SK-N-SH (cell line): ENCODE measurements at regions of chr16 and their contacts with region 1.

Region 1: GRCh38 chr16:30758988-30759521 is 2.8 kb downstream of the CFAP119 start:
- DNase-seq: no peak
- H3K4me3 ChIP-seq: no peak overlapping the region
- H3K27ac ChIP-seq: no peak overlapping the region
- H3K4me1 ChIP-seq: peaks cover 15 to 24% of the 10 kb centered on the region in 2 experiments
- H3K27me3 ChIP-seq: no peaks in the 10 kb centered on the region
- CTCF ChIP-seq: no peak
- EP300 ChIP-seq: no peak
- RAD21 ChIP-seq: no peak

Region 2: DNA sequence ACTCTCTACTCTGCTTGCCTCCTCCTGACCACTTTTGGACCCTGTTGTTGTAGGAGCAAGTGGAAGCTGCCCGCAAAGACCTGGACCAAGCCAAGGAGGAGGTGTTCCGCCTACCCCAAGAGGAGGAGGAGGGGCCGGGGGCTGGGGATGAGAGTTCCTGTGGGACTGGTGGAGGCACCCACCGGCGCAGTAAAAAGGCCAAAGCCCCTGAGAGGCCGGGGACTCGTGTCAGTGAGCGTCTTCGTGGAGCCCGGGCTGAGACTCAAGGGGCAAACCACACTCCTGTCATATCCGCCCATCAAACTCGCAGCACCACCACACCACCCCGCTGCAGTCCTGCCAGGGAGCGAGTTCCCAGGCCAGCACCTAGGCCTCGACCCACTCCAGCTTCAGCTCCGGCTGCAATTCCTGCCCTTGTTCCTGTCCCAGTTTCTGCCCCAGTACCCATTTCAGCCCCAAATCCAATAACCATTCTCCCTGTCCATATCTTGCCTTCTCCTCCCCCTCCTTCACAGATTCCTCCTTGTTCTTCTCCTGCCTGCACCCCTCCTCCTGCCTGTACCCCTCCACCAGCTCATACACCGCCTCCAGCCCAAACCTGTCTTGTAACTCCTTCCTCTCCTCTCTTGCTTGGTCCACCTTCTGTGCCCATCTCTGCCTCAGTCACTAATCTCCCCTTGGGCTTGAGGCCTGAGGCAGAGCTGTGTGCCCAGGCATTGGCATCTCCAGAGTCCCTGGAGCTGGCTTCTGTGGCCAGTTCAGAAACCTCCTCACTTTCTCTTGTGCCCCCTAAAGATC is 21.9 kb before region 1 on chr16:
- CTCF ChIA-PET with region 1: no interaction called
- POLR2A ChIA-PET with region 1: no interaction called
- DNase-seq: no peak
- H3K4me3 ChIP-seq: no peak overlapping the region
- H3K27ac ChIP-seq: no peak overlapping the region
- H3K4me1 ChIP-seq: peaks cover 11 to 21% of the 10 kb centered on the region in 2 experiments; a peak in 3 of 4 replicates
- H3K27me3 ChIP-seq: no peaks in the 10 kb centered on the region
- CTCF ChIP-seq: no peak
- EP300 ChIP-seq: no peak
- RAD21 ChIP-seq: no peak

Region 3: GRCh38 chr16:30747799-30748634 is 11.0 kb before region 1 on chr16 and contains the start of gene PHKG2:
- CTCF ChIA-PET with region 1: interaction called, 3 read pairs
- POLR2A ChIA-PET with region 1: interaction called, 10 read pairs
- DNase-seq: peak; percentile 96
- H3K4me3 ChIP-seq: peak within 1 kb of the TSS; percentile 69 to 74
- H3K27ac ChIP-seq: peak within 1 kb of the TSS; percentile 76 to 83
- H3K4me1 ChIP-seq: peaks cover 5 to 8% of the 10 kb centered on the region in 2 experiments; a peak in 2 of 4 replicates
- H3K27me3 ChIP-seq: no peaks in the 10 kb centered on the region
- CTCF ChIP-seq: no peak
- EP300 ChIP-seq: no peak
- RAD21 ChIP-seq: no peak
- polyA plus RNA-seq, gene PHKG2: 45.8 and 54.2 TPM in 2 replicates

Region 4: GRCh38 chr16:30853758-30854157 is 94.7 kb after region 1 on chr16:
- CTCF ChIA-PET with region 1: no interaction called
- POLR2A ChIA-PET with region 1: no interaction called
- DNase-seq: no peak
- H3K4me3 ChIP-seq: no peak overlapping the region
- H3K27ac ChIP-seq: no peak overlapping the region
- H3K4me1 ChIP-seq: no peaks in the 10 kb centered on the region
- H3K27me3 ChIP-seq: no peaks in the 10 kb centered on the region
- CTCF ChIP-seq: no peak
- EP300 ChIP-seq: no peak
- RAD21 ChIP-seq: no peak